A673 (cell line): ENCODE measurements at regions of chr10 and their contacts with region 1.

Region 1: DNA sequence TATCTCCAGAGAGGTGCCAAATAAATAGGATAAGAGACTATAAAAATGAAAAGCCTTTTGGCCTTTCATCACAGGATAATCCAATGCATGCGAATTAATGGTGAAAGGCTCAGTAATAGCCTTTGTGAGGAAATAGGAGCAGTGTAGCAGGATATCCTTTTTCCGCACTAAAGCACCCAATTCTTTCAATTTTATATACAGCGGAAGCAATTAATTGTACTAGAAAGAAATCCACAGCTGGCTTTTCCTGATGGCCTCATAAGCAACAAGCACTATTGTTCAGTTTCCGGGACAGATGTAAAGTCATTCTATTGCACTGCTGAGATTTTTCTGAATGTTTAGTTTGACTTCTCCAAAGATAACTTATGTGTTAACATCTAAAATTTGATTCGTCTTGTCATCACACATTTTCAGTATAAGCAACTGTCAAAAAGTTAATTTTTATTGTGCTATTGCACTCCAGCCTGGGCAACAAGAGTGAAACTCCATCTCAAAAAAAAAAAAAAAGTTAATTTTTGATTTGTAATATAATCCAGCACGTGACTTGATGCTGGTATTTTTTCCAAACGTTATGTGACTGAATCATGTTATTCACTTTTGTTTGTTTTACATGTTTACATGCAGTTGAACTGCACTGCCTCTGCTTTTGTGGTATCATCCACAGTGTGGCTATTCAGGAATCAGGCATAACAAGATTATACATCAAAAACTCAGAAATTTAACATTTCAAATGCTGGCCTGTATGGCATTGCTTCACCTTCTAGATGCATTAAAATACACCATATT is 8.4 kb upstream of the BMPR1A start:
- DNase-seq: peak; percentile 99
- H3K4me3 ChIP-seq: peak overlapping the region; percentile 7
- H3K27ac ChIP-seq: peak overlapping the region; percentile 90
- H3K4me1 ChIP-seq: peaks cover 58% of the 10 kb centered on the region
- H3K27me3 ChIP-seq: no peaks in the 10 kb centered on the region
- CTCF ChIP-seq: no peak

Region 2: DNA sequence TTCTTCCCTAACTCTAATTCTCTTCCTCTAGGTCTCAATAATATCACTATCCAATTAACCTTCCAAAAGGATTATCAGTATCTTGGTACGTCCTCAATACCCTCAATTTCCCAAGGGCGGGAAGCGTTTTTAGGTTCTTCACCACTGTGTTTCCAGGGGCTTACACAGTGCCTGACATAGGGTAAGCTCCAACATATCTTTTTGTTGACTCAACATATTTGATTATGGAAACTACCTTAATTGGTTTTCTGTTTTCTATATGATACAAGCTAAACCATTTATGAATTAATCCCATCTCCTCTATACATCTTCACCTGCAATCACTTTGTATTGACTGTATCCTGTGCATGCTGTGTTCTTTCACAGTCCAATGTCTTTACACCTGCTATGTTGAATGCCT is 1368.7 kb before region 1 on chr10:
- CTCF ChIA-PET with region 1: no interaction called
- POLR2A ChIA-PET with region 1: no interaction called
- intact Hi-C with region 1: no loop called
- DNase-seq: no peak
- H3K4me3 ChIP-seq: no peak overlapping the region
- H3K27ac ChIP-seq: no peak overlapping the region
- H3K4me1 ChIP-seq: no peaks in the 10 kb centered on the region
- H3K27me3 ChIP-seq: no peaks in the 10 kb centered on the region
- CTCF ChIP-seq: no peak

Region 3: GRCh38 chr10:86229376-86229775 is 518.6 kb before region 1 on chr10:
- CTCF ChIA-PET with region 1: no interaction called
- POLR2A ChIA-PET with region 1: no interaction called
- intact Hi-C with region 1: no loop called
- DNase-seq: no peak
- H3K4me3 ChIP-seq: no peak overlapping the region
- H3K27ac ChIP-seq: no peak overlapping the region
- H3K4me1 ChIP-seq: no peaks in the 10 kb centered on the region
- H3K27me3 ChIP-seq: no peaks in the 10 kb centered on the region
- CTCF ChIP-seq: no peak

Region 4: GRCh38 chr10:86489071-86489810 is 258.7 kb before region 1 on chr10:
- CTCF ChIA-PET with region 1: no interaction called
- POLR2A ChIA-PET with region 1: no interaction called
- intact Hi-C with region 1: no loop called
- DNase-seq: no peak
- H3K4me3 ChIP-seq: no peak overlapping the region
- H3K27ac ChIP-seq: no peak overlapping the region
- H3K4me1 ChIP-seq: no peaks in the 10 kb centered on the region
- H3K27me3 ChIP-seq: no peaks in the 10 kb centered on the region
- CTCF ChIP-seq: no peak

Region 5: GRCh38 chr10:86698207-86698940 is 49.6 kb before region 1 on chr10:
- CTCF ChIA-PET with region 1: no interaction called
- POLR2A ChIA-PET with region 1: no interaction called
- intact Hi-C with region 1: no loop called
- DNase-seq: no peak
- H3K4me3 ChIP-seq: no peak overlapping the region
- H3K27ac ChIP-seq: no peak overlapping the region
- H3K4me1 ChIP-seq: peaks cover 17% of the 10 kb centered on the region
- H3K27me3 ChIP-seq: no peaks in the 10 kb centered on the region
- CTCF ChIP-seq: no peak

Region 6: DNA sequence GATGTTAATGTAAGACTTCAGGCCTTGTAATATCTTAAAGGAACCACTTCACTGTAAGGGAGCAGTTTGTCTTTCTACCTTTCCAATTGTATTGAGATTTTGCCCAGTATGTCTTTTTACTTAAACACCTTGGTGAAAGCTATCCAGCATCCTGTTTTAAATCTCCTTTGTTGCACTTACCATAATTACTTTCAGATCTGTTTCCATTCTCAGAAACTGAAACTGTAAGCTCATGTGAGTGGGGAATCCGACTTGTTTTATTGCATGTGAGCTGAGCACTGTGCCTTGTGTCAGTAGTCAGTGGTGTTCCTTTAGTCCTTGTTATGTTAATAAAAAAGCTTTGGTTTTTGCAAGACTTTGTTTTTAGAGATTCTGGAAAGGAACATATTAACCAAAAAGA is 50.6 kb after region 1 on chr10:
- CTCF ChIA-PET with region 1: no interaction called
- POLR2A ChIA-PET with region 1: no interaction called
- intact Hi-C with region 1: loop called (anchors 1 kb)
- DNase-seq: peak; percentile 70
- H3K4me3 ChIP-seq: peak overlapping the region; percentile 23
- H3K27ac ChIP-seq: peak overlapping the region; percentile 77
- H3K4me1 ChIP-seq: peaks cover 91% of the 10 kb centered on the region
- H3K27me3 ChIP-seq: no peaks in the 10 kb centered on the region
- CTCF ChIP-seq: no peak